OCI-LY7 (cell line): ENCODE measurements at regions of chr16 and their contacts with region 1.

Region 1: GRCh38 chr16:24539291-24539849 is at the start of gene RBBP6:
- DNase-seq: peak; percentile 97
- H3K4me3 ChIP-seq: peak within 1 kb of the TSS; percentile 99
- H3K27ac ChIP-seq: peak within 1 kb of the TSS; percentile 80
- H3K4me1 ChIP-seq: peaks cover 44% of the 10 kb centered on the region
- CTCF ChIP-seq: peak; percentile 56
- total RNA-seq, gene RBBP6: 32.6 and 41.2 TPM in 2 replicates

Region 2: GRCh38 chr16:24729985-24730815 is 190.8 kb after region 1 on chr16:
- CTCF ChIA-PET with region 1: no interaction called
- POLR2A ChIA-PET with region 1: interaction called, 3 read pairs
- intact Hi-C with region 1: loop called (anchors 1 kb)
- DNase-seq: peak; percentile 21
- H3K4me3 ChIP-seq: peak overlapping the region; percentile 95
- H3K27ac ChIP-seq: peak overlapping the region; percentile 80
- H3K4me1 ChIP-seq: peaks cover 24% of the 10 kb centered on the region
- CTCF ChIP-seq: no peak

Region 3: GRCh38 chr16:25257504-25257955 is 718.2 kb after region 1 on chr16 and contains the start of gene ZKSCAN2:
- CTCF ChIA-PET with region 1: no interaction called
- POLR2A ChIA-PET with region 1: no interaction called
- intact Hi-C with region 1: loop called (anchors 10 kb)
- DNase-seq: peak; percentile 92
- H3K4me3 ChIP-seq: peak within 1 kb of the TSS; percentile 95
- H3K27ac ChIP-seq: peak within 1 kb of the TSS; percentile 77
- H3K4me1 ChIP-seq: peaks cover 30% of the 10 kb centered on the region
- CTCF ChIP-seq: no peak
- total RNA-seq, gene ZKSCAN2: 7.6 and 10.1 TPM in 2 replicates